Naive thymus-derived CD4-positive, alpha-beta T cell (primary cell): ENCODE measurements at regions of chr1 and their contacts with region 1.

Region 1: GRCh38 chr1:28642847-28643635 is at the start of gene TAF12:
- DNase-seq: peak; percentile 81 to 92 (median 86)
- ATAC-seq: peak; percentile 91
- H3K4me3 ChIP-seq: peak within 1 kb of the TSS; percentile 93
- H3K4me3 Mint-ChIP-seq: peak within 1 kb of the TSS; percentile 94 to 100 (median 98)
- H3K27ac ChIP-seq: peak within 1 kb of the TSS; percentile 95
- H3K27ac Mint-ChIP-seq: peak within 1 kb of the TSS; percentile 93 to 99 (median 99)
- H3K4me1 ChIP-seq: peaks cover 26 to 35% of the 10 kb centered on the region in 2 donors
- H3K4me1 Mint-ChIP-seq: peaks cover 30 to 65% (median 55%) of the 10 kb centered on the region in 7 donors
- H3K27me3 ChIP-seq: no peaks in the 10 kb centered on the region
- H3K27me3 Mint-ChIP-seq: peaks cover 0 to 2% (median 0%) of the 10 kb centered on the region in 5 donors
- total RNA-seq, gene TAF12: 13.0 to 34.6 (median 19.3) TPM

Region 2: GRCh38 chr1:28329395-28330153 is 313.5 kb before region 1 on chr1:
- CTCF ChIA-PET with region 1: no interaction called
- POLR2A ChIA-PET with region 1: interaction called, 4 read pairs
- intact Hi-C with region 1: loop called in 1 of 2 experiments (anchors 2 kb)
- DNase-seq: peak in 2 of 9 donors; percentile 32 to 48
- ATAC-seq: peak; percentile 14
- H3K4me3 ChIP-seq: peak overlapping the region; percentile 59
- H3K4me3 Mint-ChIP-seq: peak overlapping the region; percentile 89 to 98 (median 92)
- H3K27ac ChIP-seq: peak overlapping the region; percentile 86
- H3K27ac Mint-ChIP-seq: peak overlapping the region; percentile 92 to 100 (median 98)
- H3K4me1 ChIP-seq: peaks cover 13 to 14% of the 10 kb centered on the region in 2 donors
- H3K4me1 Mint-ChIP-seq: peaks cover 20 to 40% (median 39%) of the 10 kb centered on the region in 7 donors
- H3K27me3 ChIP-seq: no peaks in the 10 kb centered on the region
- H3K27me3 Mint-ChIP-seq: peaks cover 0 to 3% (median 0%) of the 10 kb centered on the region in 5 donors

Region 3: GRCh38 chr1:28518000-28518744 is 124.9 kb before region 1 on chr1:
- CTCF ChIA-PET with region 1: interaction called, 5 read pairs
- POLR2A ChIA-PET with region 1: interaction called, 7 read pairs
- intact Hi-C with region 1: loop called (anchors 1 to 2 kb)
- DNase-seq: peak; percentile 77 to 94 (median 84)
- ATAC-seq: peak; percentile 95
- H3K4me3 ChIP-seq: peak overlapping the region; percentile 81
- H3K4me3 Mint-ChIP-seq: peak overlapping the region; percentile 76 to 91 (median 88)
- H3K27ac ChIP-seq: peak overlapping the region; percentile 76
- H3K27ac Mint-ChIP-seq: peak overlapping the region; percentile 59 to 91 (median 83)
- H3K4me1 ChIP-seq: peaks cover 9 to 10% of the 10 kb centered on the region in 2 donors
- H3K4me1 Mint-ChIP-seq: peaks cover 16 to 46% (median 23%) of the 10 kb centered on the region in 7 donors
- H3K27me3 ChIP-seq: no peaks in the 10 kb centered on the region
- H3K27me3 Mint-ChIP-seq: no peaks in the 10 kb centered on the region

Region 4: GRCh38 chr1:28631713-28632112 is 11.3 kb before region 1 on chr1:
- CTCF ChIA-PET with region 1: no interaction called
- POLR2A ChIA-PET with region 1: interaction called, 11 read pairs
- intact Hi-C with region 1: no loop called
- DNase-seq: no peak
- ATAC-seq: no peak
- H3K4me3 ChIP-seq: no peak overlapping the region
- H3K4me3 Mint-ChIP-seq: no peak overlapping the region
- H3K27ac ChIP-seq: no peak overlapping the region
- H3K27ac Mint-ChIP-seq: peak overlapping the region in 2 of 9 donors; percentile 17 to 52
- H3K4me1 ChIP-seq: no peaks in the 10 kb centered on the region
- H3K4me1 Mint-ChIP-seq: peaks cover 6 to 17% (median 13%) of the 10 kb centered on the region in 7 donors
- H3K27me3 ChIP-seq: no peaks in the 10 kb centered on the region
- H3K27me3 Mint-ChIP-seq: no peaks in the 10 kb centered on the region

Region 5: GRCh38 chr1:28684937-28685336 is 41.9 kb after region 1 on chr1:
- CTCF ChIA-PET with region 1: interaction called, 6 read pairs
- POLR2A ChIA-PET with region 1: interaction called, 5 read pairs
- intact Hi-C with region 1: loop called (anchors 5 kb)
- DNase-seq: no peak
- ATAC-seq: no peak
- H3K4me3 ChIP-seq: no peak overlapping the region
- H3K4me3 Mint-ChIP-seq: no peak overlapping the region
- H3K27ac ChIP-seq: no peak overlapping the region
- H3K27ac Mint-ChIP-seq: no peak overlapping the region
- H3K4me1 ChIP-seq: no peaks in the 10 kb centered on the region
- H3K4me1 Mint-ChIP-seq: peaks cover 0 to 20% (median 10%) of the 10 kb centered on the region in 7 donors
- H3K27me3 ChIP-seq: no peaks in the 10 kb centered on the region
- H3K27me3 Mint-ChIP-seq: no peaks in the 10 kb centered on the region

Region 6: DNA sequence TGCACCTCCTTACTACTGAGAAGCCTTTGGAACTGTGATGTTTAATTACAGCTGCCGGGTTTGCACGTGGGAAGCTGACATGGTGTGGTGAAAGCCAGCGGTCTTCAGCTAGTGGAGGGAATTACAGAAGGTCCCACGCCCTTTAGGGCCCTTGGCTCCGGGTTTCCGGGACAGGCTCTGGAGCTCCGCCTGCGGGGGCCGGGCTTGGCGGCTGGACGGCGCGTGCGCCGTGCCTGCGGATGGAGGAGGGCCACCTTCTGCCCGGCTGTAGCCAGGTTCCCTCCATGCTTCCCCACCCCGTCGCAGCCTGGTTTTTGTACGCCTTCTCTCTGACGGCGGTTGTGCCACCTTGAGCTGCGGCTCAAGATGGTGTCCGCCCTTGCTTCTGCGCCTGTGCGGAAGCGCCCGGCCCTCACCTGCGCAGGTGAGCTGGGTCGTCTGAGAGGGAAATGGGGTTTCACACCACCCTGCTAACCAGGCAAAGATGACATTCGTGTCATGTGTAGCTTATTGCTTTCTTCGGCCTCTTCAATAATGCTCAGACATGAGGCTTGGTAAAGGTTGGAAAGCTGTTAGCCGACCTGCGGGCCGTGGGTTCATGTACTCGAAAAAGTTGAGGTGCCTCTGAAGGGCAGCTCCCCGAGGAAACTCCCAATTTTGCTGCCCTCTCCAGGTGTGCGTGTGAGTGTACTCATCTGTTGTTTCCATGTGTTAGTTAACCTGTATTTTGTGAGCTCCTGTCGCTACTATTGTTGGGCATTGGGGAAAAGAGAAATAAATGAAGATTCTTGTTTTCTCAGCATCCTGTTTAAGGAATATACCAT is 132.3 kb after region 1 on chr1:
- CTCF ChIA-PET with region 1: interaction called, 5 read pairs
- POLR2A ChIA-PET with region 1: interaction called, 14 read pairs
- intact Hi-C with region 1: no loop called
- DNase-seq: peak; percentile 52 to 77 (median 68)
- ATAC-seq: peak; percentile 91
- H3K4me3 ChIP-seq: peak overlapping the region; percentile 63
- H3K4me3 Mint-ChIP-seq: peak overlapping the region; percentile 79 to 88 (median 84)
- H3K27ac ChIP-seq: peak overlapping the region; percentile 52
- H3K27ac Mint-ChIP-seq: peak overlapping the region; percentile 23 to 94 (median 87)
- H3K4me1 ChIP-seq: peaks cover 6 to 8% of the 10 kb centered on the region in 2 donors
- H3K4me1 Mint-ChIP-seq: peaks cover 0 to 14% (median 12%) of the 10 kb centered on the region in 7 donors
- H3K27me3 ChIP-seq: no peaks in the 10 kb centered on the region
- H3K27me3 Mint-ChIP-seq: peaks cover 0 to 5% (median 0%) of the 10 kb centered on the region in 5 donors